ENCODE measurements at regions of chr6 and their contacts with region 1.

Region 1: DNA sequence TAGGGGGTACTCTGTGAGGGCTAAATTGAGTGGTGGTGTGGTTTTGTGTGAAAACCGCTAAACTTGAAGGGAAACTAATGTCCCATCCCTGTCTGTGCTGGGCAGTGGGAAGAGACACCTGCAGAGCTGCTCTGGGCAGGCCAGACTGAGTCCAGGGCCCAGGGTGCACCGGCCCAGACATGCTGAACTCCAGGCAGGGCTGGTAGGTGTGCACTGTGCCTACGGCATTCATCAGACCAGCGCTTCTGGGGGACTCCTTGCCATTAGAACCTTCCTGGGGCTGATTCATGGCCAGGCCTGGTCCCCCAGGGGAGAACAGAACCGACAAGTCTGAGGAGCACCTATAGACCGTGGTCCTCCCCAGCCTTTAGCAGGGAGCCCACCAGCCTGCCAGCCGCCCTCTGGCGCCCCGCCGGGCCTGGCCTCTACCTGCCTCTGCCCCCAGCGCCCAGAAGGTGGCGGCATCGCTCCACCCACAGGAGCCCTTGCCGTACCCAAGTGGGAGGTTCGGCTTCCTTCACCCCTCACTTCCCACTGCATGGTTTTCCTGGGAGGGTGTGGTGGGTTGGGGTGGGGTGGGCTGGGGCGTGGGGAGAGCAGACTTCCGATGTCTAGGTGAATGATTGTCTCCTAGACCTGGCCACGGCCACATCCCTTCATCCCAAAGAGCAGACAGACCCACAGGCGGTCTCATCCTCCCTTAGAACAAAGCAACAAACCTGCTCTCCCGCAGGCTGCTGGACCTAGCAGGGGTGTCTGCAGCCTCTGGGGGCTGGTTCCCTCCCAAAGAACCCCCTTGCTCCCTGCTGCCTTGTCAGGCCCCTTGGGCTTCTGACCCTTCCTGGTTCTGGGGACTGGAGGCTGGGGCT is 15.5 kb downstream of the CCDC167 start:
- DNase-seq: no peak
- H3K4me3 ChIP-seq: no peak overlapping the region
- H3K27ac ChIP-seq: no peak overlapping the region
- H3K4me1 ChIP-seq: peaks cover 0 to 7% (median 3%) of the 10 kb centered on the region in 3 donors
- H3K27me3 ChIP-seq: no peaks in the 10 kb centered on the region
- CTCF ChIP-seq: peak; percentile 71 to 91 (median 80)
- POLR2A ChIP-seq: no peak

Region 2: DNA sequence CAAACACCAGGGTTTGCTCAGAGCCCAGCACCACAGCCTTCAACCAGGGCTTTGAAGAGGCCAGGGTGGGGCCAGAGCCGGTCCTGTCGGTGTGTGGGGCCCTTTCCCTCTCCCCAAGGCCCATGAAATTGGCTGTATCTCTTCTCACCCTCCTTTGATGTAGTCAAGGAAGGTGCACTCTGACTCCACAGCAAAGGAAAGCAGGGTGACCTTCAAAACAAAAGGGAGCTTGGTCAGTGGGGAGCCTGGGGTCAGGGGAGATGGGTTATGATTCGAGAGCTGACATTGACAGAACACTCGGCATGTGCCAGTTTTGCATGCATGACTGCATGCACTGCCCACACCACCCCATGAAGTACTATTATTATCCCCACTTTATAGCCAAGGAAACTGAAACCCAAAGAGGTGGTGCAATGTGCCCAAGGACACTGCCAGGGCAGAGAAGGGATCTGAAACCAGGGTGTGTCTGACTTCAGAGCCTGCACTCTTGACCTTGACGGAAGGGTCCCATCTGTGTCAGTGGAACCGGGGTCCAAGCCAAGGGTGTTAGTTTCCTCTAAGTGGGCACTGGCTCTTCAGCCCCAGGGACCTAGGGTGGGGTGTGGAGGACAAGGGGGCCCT is 731.2 kb before region 1 on chr6:
- intact Hi-C with region 1: no loop called
- DNase-seq: no peak
- H3K4me3 ChIP-seq: no peak overlapping the region
- H3K27ac ChIP-seq: peak overlapping the region; percentile 78 to 91 (median 82)
- H3K4me1 ChIP-seq: peaks cover 46 to 84% (median 52%) of the 10 kb centered on the region in 3 donors
- H3K27me3 ChIP-seq: no peaks in the 10 kb centered on the region
- CTCF ChIP-seq: no peak
- POLR2A ChIP-seq: no peak

Region 3: GRCh38 chr6:37451441-37452193 is 32.5 kb before region 1 on chr6:
- intact Hi-C with region 1: no loop called
- DNase-seq: no peak
- H3K4me3 ChIP-seq: no peak overlapping the region
- H3K27ac ChIP-seq: no peak overlapping the region
- H3K4me1 ChIP-seq: peaks cover 0 to 13% (median 10%) of the 10 kb centered on the region in 3 donors
- H3K27me3 ChIP-seq: no peaks in the 10 kb centered on the region
- CTCF ChIP-seq: no peak
- POLR2A ChIP-seq: no peak

Region 4: GRCh38 chr6:37566111-37566949 is 82.2 kb after region 1 on chr6:
- intact Hi-C with region 1: loop called (anchors 5 kb)
- DNase-seq: no peak
- H3K4me3 ChIP-seq: peak overlapping the region in 3 of 4 donors; percentile 29 to 61 (median 39)
- H3K27ac ChIP-seq: no peak overlapping the region
- H3K4me1 ChIP-seq: peaks cover 4 to 12% (median 6%) of the 10 kb centered on the region in 3 donors
- H3K27me3 ChIP-seq: peaks cover 0 to 63% (median 0%) of the 10 kb centered on the region in 4 donors
- CTCF ChIP-seq: peak; percentile 75 to 89 (median 84)
- POLR2A ChIP-seq: no peak

Region 5: DNA sequence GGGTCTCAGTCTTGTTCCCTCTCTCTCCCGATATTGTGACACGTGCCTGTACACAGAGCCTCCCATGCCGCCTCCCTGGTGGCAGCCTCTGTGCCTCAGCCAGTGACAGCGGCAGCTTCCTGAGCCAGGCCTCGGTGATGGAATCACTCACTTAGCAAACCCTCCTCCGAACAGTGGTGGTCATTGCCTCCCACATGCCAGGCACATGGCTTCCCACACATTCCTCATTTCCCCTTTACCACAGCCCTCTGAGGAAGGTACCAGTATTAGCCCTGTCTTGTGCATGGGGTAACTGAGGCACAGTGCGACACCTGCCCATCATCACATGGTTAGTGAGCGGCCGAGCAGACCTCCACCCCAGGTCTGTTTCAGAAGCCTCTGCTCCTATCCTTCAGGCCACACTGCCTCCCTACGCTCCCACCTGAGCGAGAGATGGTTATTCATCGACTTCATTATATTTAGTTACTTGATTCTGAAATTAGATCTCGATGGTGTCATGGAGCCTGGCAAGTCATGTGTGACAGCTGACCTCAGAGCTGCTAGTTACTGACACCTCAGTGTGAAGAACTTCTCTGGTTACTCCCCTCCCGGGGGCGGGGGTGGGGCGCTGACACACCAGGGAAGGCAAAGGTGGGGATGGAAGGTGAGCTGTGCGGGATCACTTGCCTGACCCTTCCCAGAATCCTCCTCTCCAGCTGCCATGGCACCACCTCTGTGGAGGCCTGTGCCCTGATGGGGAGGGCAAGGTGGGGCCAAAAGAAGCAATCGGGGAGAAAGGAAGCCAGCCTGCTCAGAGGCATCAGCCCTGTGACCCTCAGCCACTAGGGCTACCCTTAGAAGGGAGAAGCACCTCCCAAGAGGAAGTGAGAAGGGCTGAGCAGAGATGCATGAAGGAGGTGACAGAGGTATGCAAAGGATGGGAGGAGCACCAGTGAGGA is 195.7 kb after region 1 on chr6:
- intact Hi-C with region 1: no loop called
- DNase-seq: no peak
- H3K4me3 ChIP-seq: no peak overlapping the region
- H3K27ac ChIP-seq: peak overlapping the region in 2 of 4 donors; percentile 57 to 68
- H3K4me1 ChIP-seq: peaks cover 6 to 18% (median 13%) of the 10 kb centered on the region in 3 donors
- H3K27me3 ChIP-seq: peaks cover 0 to 5% (median 0%) of the 10 kb centered on the region in 4 donors
- CTCF ChIP-seq: no peak
- POLR2A ChIP-seq: no peak

Region 6: GRCh38 chr6:37691904-37692806 is 208.0 kb after region 1 on chr6:
- intact Hi-C with region 1: loop called (anchors 10 kb)
- DNase-seq: no peak
- H3K4me3 ChIP-seq: no peak overlapping the region
- H3K27ac ChIP-seq: no peak overlapping the region
- H3K4me1 ChIP-seq: peaks cover 16 to 52% (median 31%) of the 10 kb centered on the region in 3 donors
- H3K27me3 ChIP-seq: peaks cover 0 to 50% (median 0%) of the 10 kb centered on the region in 4 donors
- CTCF ChIP-seq: peak; percentile 96 to 99 (median 98)
- POLR2A ChIP-seq: no peak